Activated T-helper 2 cell treated with anti-CD3 and anti-CD28 coated beads, Interferon-gamma antibody, Interleukin-2, Interleukin-4, amounts not matched to agents 10 μg/mL and 5 μg/mL and 100 μg/mL, durations not matched to agents 14 hours and 24 hours and 36 hours (primary cell): ENCODE measurements at regions of chr4 and their contacts with region 1.

Region 1: DNA sequence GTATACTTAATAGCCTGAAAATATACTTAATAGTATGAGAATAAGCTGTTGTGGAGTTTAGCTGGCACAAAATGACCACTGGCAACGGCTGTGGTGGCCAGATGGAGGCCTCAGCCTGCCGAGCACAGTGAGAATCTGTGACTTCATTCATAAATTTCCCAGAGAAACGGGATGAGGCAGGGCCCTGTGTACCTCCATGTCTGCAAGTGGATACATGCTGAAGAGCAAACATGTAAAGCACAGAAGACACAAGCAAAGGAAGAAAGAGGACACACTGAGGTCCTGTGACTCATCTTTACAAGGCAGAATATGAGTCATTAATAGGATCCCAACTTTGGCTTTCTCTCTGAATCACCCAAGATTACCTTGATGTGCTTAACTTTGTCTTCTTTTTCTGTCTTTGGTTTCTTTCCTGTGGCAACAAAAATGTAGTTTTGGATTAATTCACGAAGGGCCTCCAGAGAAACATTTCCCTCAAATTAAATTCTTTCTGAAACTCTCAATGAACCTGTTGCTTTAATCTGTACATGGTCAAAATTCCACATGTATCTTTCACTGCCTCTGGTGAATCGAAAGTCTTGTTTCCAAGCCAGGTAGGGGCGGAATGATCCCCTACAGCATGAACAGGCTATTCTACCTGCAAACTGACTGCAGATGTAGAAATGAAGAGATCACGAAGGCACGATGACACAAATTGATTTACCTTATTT is 56.4 kb downstream of the IRF2 start:
- DNase-seq: no peak
- H3K4me3 Mint-ChIP-seq: peak overlapping the region; percentile 48
- H3K27ac Mint-ChIP-seq: peak overlapping the region; percentile 91
- H3K4me1 Mint-ChIP-seq: peaks cover 73% of the 10 kb centered on the region
- H3K27me3 Mint-ChIP-seq: no peaks in the 10 kb centered on the region

Region 2: GRCh38 chr4:184126800-184127199 is 291.2 kb before region 1 on chr4:
- intact Hi-C with region 1: no loop called
- DNase-seq: no peak
- H3K4me3 Mint-ChIP-seq: no peak overlapping the region
- H3K27ac Mint-ChIP-seq: no peak overlapping the region
- H3K4me1 Mint-ChIP-seq: no peaks in the 10 kb centered on the region
- H3K27me3 Mint-ChIP-seq: peaks cover 23% of the 10 kb centered on the region

Region 3: DNA sequence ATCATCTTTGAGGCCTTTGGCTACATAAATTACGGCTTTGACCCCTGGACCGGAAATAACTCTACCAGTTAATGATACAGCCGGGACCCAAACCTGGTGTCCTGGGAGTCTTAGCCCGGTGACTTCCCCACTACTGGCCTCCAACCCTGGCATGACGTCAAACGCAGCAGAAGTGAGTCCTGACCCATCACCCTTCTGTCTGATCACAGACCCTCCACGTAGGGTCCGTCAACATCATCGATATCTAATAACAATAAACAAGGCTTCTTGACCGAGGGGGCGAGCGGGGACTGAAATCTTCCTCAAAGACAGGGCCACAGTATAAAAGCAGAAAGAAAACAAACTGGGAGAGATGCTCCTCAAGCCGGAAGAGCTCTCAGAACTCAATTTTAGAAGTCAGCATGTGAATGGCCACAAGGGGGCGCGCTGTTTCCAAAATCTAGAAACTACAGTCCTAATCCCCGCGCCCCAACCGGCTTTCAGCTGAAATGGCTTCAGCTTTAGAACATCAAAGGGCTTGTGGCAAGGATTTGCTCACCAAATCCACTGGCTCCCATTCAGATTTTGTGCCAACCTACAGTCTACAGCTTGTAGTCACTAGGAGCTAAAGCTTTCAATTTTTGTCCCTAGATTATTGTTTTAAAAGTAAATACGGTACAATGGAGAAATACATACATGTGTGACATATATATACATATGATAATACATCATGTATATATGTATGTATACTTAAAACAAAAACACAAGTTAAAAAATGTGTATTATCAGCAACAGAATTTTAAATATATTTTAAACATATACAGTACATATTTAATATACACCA is 153.8 kb before region 1 on chr4:
- intact Hi-C with region 1: loop called (anchors 1 kb)
- DNase-seq: peak; percentile 85
- H3K4me3 Mint-ChIP-seq: no peak overlapping the region
- H3K27ac Mint-ChIP-seq: peak overlapping the region; percentile 54
- H3K4me1 Mint-ChIP-seq: peaks cover 54% of the 10 kb centered on the region
- H3K27me3 Mint-ChIP-seq: no peaks in the 10 kb centered on the region

Region 4: DNA sequence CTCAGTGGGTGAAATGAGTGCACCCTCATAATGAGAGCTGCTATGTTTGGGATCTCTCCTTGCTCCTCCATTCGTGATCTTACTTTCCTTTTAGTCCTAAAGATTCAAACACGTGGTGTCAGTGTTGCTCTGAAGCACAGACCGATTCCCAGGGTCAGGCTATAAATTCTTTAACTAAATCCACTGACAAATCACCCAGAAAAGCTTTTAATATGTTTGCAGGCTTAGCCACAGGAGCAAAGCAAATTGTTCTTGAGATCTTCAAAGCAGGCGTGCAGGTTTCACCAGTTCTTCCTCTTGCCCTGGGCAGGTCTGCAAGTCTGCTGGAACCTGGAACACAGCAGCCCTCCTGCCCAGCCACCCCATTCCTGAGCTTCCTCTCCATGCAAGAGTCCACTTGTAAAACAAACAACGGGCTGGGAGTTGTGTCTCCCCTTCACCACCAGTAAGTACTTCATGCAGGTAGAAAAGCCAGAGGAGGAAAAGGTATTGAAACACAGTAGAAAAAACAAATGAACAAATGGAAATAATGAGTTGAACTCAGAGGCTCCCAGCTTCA is 130.2 kb before region 1 on chr4:
- intact Hi-C with region 1: loop called (anchors 1 kb)
- DNase-seq: no peak
- H3K4me3 Mint-ChIP-seq: no peak overlapping the region
- H3K27ac Mint-ChIP-seq: peak overlapping the region; percentile 13
- H3K4me1 Mint-ChIP-seq: peaks cover 49% of the 10 kb centered on the region
- H3K27me3 Mint-ChIP-seq: no peaks in the 10 kb centered on the region

Region 5: DNA sequence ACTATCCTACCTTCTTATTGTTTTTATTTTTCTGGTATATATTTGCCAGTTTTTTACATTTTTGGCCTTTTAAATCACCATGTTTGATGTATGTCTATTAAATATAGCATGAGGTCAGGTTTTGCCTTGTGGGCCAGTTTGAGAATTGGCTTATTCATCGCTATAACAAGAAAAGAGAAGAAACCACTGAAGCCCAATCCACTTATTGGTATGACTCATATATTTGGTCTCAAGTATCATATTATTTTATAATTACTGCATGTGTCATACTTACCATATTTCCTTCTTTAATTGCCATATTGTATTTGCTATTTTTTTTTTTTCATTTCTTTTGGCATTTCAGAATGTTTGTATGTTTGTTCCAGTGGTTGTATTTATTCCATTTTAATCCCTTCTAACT is 42.9 kb before region 1 on chr4:
- intact Hi-C with region 1: loop called (anchors 2 kb)
- DNase-seq: no peak
- H3K4me3 Mint-ChIP-seq: no peak overlapping the region
- H3K27ac Mint-ChIP-seq: peak overlapping the region; percentile 4
- H3K4me1 Mint-ChIP-seq: peaks cover 17% of the 10 kb centered on the region
- H3K27me3 Mint-ChIP-seq: no peaks in the 10 kb centered on the region

Region 6: GRCh38 chr4:184474263-184475095 is 56.5 kb after region 1 on chr4 and contains the start of gene IRF2:
- intact Hi-C with region 1: loop called (anchors 1 kb)
- DNase-seq: peak; percentile 96
- H3K4me3 Mint-ChIP-seq: peak within 1 kb of the TSS; percentile 95
- H3K27ac Mint-ChIP-seq: peak within 1 kb of the TSS; percentile 96
- H3K4me1 Mint-ChIP-seq: peaks cover 46% of the 10 kb centered on the region
- H3K27me3 Mint-ChIP-seq: no peaks in the 10 kb centered on the region
- total RNA-seq, gene IRF2: 47.6 and 53.2 TPM in 2 replicates

Region 7: GRCh38 chr4:184538023-184538599 is 120.2 kb after region 1 on chr4:
- intact Hi-C with region 1: loop called (anchors 1 kb)
- DNase-seq: peak; percentile 53
- H3K4me3 Mint-ChIP-seq: peak overlapping the region; percentile 85
- H3K27ac Mint-ChIP-seq: peak overlapping the region; percentile 87
- H3K4me1 Mint-ChIP-seq: peaks cover 61% of the 10 kb centered on the region
- H3K27me3 Mint-ChIP-seq: no peaks in the 10 kb centered on the region

Region 8: DNA sequence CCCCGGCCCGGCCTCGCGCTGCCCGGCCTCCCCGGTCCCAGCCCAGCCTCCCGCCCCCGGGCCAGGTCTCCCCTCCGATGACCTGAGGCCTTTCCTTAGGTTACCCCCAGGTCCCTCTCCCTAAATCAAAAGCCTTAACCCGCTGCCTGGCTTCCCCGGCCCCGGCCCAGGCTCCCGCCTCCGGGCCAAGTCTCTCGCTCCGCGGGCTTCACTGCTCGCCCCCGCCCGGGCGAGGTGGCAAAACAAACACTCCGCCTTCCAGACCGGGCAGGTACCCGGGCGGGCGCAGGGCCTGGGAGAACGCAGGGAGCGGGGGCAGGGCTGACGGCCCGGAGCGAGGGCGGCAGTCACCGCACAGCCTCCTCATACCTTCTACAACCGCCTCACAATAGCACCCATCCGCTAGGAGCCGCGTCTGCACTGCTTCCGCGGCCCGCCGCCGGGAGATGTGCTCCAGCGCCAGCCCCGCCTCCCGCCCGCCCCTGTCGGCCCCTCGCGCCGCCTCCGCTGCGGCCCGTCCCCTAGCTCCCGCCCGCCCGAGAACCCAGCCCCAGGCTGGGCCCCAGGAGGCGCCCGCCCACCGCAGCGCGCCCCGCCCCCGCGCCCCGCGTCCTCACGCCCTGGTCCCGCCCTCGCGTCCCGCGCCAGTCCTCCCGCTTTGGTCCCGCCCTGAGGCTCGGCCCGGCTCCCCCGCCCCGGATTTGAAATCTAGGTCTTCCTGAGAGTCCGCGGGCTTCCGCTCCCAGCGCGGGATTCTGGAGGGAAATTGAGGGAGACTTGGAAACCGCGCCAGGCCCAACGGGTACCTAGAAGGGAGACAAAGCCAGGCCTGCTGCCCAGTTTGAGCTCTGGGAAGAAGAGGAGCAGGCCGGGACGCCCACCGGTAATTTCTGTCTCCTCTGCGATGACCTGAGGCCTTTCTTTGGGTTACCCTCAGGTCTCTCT is 231.3 kb after region 1 on chr4 and contains the starts of genes CASP3 and PRIMPOL:
- intact Hi-C with region 1: loop called (anchors 2 kb)
- DNase-seq: peak; percentile 96
- H3K4me3 Mint-ChIP-seq: peak within 1 kb of the TSS; percentile 95
- H3K27ac Mint-ChIP-seq: peak within 1 kb of the TSS; percentile 88
- H3K4me1 Mint-ChIP-seq: peaks cover 52% of the 10 kb centered on the region
- H3K27me3 Mint-ChIP-seq: no peaks in the 10 kb centered on the region
- total RNA-seq, gene CASP3: 90.9 and 94.1 TPM in 2 replicates
- total RNA-seq, gene PRIMPOL: 16.2 and 17.6 TPM in 2 replicates